Body of pancreas (tissue), 4 donors: ENCODE measurements at regions of chr4 and their contacts with region 1.

Region 1: GRCh38 chr4:85147439-85148076 is 181.1 kb upstream of the WDFY3 start:
- DNase-seq: peak; percentile 57 to 81 (median 66)
- ATAC-seq: peak; percentile 94
- H3K4me3 ChIP-seq: no peak overlapping the region
- H3K27ac ChIP-seq: no peak overlapping the region
- H3K4me1 ChIP-seq: no peaks in the 10 kb centered on the region
- H3K27me3 ChIP-seq: no peaks in the 10 kb centered on the region
- CTCF ChIP-seq: peak; percentile 43 to 83 (median 73)
- POLR2A ChIP-seq: no peak

Region 2: GRCh38 chr4:84837751-84838150 is 309.8 kb before region 1 on chr4:
- intact Hi-C with region 1: no loop called
- DNase-seq: no peak
- ATAC-seq: no peak
- H3K4me3 ChIP-seq: no peak overlapping the region
- H3K27ac ChIP-seq: no peak overlapping the region
- H3K4me1 ChIP-seq: no peaks in the 10 kb centered on the region
- H3K27me3 ChIP-seq: no peaks in the 10 kb centered on the region
- CTCF ChIP-seq: no peak
- POLR2A ChIP-seq: no peak

Region 3: GRCh38 chr4:85756938-85757337 is 609.4 kb after region 1 on chr4:
- intact Hi-C with region 1: loop called (anchors 10 kb)
- DNase-seq: peak in 3 of 4 donors; percentile 39 to 54 (median 48)
- ATAC-seq: peak; percentile 45
- H3K4me3 ChIP-seq: no peak overlapping the region
- H3K27ac ChIP-seq: no peak overlapping the region
- H3K4me1 ChIP-seq: peaks cover 9% of the 10 kb centered on the region
- H3K27me3 ChIP-seq: no peaks in the 10 kb centered on the region
- CTCF ChIP-seq: peak in 6 of 7 experiments; percentile 31 to 58 (median 46)
- POLR2A ChIP-seq: no peak